PC-9 (cell line): ENCODE measurements at regions of chr1 and their contacts with region 1.

Region 1: DNA sequence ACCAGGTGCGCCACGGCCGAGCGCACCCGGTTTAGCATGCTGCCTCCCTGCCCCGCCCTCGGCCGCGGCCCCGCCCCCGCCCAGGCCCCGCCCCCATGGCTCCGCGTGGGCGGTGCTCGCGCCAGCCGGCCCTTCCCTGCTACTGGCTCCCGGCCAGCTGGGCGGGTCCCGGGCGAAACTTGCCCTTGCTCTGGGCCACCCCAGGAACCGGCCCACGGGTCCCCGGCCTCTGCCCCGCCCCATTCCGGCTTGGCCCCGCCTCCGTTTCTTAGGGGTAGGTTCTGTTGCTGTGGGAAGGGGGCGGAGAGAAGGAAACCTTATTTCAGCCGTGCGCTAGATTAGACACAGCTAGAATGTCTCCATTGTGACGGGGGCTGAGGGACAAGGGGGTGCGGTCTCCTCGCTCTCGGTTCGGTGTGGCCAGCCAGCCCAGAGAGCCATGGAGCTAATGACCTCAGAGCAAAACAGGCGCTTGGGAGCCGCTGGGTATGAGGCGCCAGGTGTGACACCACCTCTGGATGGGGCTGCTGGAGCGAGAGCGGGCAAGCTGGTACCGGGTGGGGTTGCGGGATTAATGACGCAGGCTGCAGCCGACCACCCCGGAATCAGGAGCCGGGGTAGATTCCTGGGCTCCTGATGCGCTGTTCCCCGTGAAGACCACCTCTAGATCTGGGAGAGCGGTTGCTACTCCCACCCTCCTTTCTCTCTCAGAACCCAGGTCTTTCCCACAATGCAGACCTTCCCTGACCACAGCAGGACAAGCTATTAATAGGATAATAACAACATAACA is at the start of gene PPM1J:
- DNase-seq: peak; percentile 92 to 99
- H3K4me3 ChIP-seq: peak within 1 kb of the TSS; percentile 85
- H3K27ac ChIP-seq: no peak within 1 kb of the TSS
- H3K4me1 ChIP-seq: peaks cover 18% of the 10 kb centered on the region
- H3K27me3 ChIP-seq: no peaks in the 10 kb centered on the region
- CTCF ChIP-seq: no peak
- total RNA-seq, gene PPM1J: 6.0 and 7.7 TPM in 2 replicates

Region 2: GRCh38 chr1:112803906-112804762 is 88.7 kb after region 1 on chr1:
- CTCF ChIA-PET with region 1: interaction called, 25 read pairs
- POLR2A ChIA-PET with region 1: interaction called, 12 read pairs
- intact Hi-C with region 1: loop called (anchors 1 kb)
- DNase-seq: peak; percentile 68 to 78
- H3K4me3 ChIP-seq: no peak overlapping the region
- H3K27ac ChIP-seq: no peak overlapping the region
- H3K4me1 ChIP-seq: peaks cover 21% of the 10 kb centered on the region
- H3K27me3 ChIP-seq: no peaks in the 10 kb centered on the region
- CTCF ChIP-seq: peak; percentile 96

Region 3: GRCh38 chr1:112882271-112882744 is 166.8 kb after region 1 on chr1:
- CTCF ChIA-PET with region 1: interaction called, 3 read pairs
- POLR2A ChIA-PET with region 1: no interaction called
- intact Hi-C with region 1: loop called (anchors 5 kb)
- DNase-seq: no peak
- H3K4me3 ChIP-seq: no peak overlapping the region
- H3K27ac ChIP-seq: no peak overlapping the region
- H3K4me1 ChIP-seq: peaks cover 1% of the 10 kb centered on the region
- H3K27me3 ChIP-seq: no peaks in the 10 kb centered on the region
- CTCF ChIP-seq: no peak

Region 4: GRCh38 chr1:113042285-113043143 is 327.1 kb after region 1 on chr1:
- CTCF ChIA-PET with region 1: interaction called, 18 read pairs
- POLR2A ChIA-PET with region 1: no interaction called
- intact Hi-C with region 1: loop called (anchors 1 kb)
- DNase-seq: peak; percentile 71 to 74
- H3K4me3 ChIP-seq: no peak overlapping the region
- H3K27ac ChIP-seq: no peak overlapping the region
- H3K4me1 ChIP-seq: peaks cover 18% of the 10 kb centered on the region
- H3K27me3 ChIP-seq: no peaks in the 10 kb centered on the region
- CTCF ChIP-seq: peak; percentile 82

Region 5: DNA sequence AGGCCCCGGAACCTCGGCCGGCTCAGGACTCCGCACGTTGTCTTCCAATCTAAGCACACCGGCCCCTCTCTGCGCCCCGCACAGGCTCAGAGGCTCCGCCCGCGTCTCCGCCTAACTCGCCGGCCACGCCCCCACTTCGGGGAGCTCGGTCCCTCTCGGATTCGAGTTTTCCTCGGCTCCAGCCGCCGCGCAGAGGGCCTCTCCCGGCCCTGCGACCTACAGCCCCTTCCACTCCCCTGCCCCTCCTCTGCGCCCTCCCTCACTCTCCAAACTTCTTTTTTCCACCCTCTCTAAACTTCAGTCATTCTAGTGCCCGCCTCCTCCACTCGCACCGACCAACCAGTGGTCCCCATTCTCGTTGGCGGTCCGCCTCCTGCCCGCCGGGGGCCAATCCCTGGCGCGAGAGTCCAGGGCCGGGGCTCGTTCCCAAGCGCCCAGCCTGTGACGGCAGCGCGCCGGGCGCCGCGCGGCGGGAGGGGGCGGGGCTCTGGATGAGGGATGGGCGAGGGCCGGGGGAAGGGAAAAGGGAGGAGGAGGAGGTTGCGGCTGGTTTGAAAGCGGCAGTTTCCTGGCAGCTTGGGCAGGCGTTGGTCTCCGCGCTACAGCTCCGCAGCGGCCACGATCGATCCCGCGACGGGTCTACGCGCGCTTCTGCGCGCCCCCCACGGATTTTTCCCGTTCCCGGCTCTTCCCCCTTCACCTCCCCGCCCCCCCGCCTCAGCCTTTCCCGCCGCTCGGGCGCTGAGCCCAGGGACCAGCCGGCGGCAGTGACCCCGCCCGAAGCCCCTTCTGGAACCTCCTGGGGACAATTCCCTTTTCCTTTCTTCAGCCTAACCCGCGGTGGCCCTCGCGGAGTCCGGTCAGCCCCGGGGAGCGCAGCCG is 674.7 kb after region 1 on chr1 and contains the start of gene MAGI3:
- CTCF ChIA-PET with region 1: no interaction called
- POLR2A ChIA-PET with region 1: no interaction called
- intact Hi-C with region 1: loop called (anchors 5 kb)
- DNase-seq: peak; percentile 97 to 99
- H3K4me3 ChIP-seq: peak within 1 kb of the TSS; percentile 78
- H3K27ac ChIP-seq: peak within 1 kb of the TSS; percentile 65
- H3K4me1 ChIP-seq: peaks cover 57% of the 10 kb centered on the region
- H3K27me3 ChIP-seq: no peaks in the 10 kb centered on the region
- CTCF ChIP-seq: no peak
- total RNA-seq, gene MAGI3: 17.3 and 18.5 TPM in 2 replicates